Heart left ventricle (tissue), 16 donors: ENCODE measurements at regions of chr12 and their contacts with region 1.

Region 1: GRCh38 chr12:120710031-120710804 is at the start of gene UNC119B:
- DNase-seq: peak; percentile 71 to 89 (median 82)
- ATAC-seq: peak; percentile 47 to 95 (median 90)
- H3K4me3 ChIP-seq: peak within 1 kb of the TSS; percentile 54 to 99 (median 82)
- H3K27ac ChIP-seq: peak within 1 kb of the TSS; percentile 70 to 95 (median 90)
- H3K4me1 ChIP-seq: peaks cover 4 to 35% (median 27%) of the 10 kb centered on the region in 12 donors
- H3K27me3 ChIP-seq: no peaks in the 10 kb centered on the region
- CTCF ChIP-seq: no peak
- POLR2A ChIP-seq: no peak
- total RNA-seq, gene UNC119B: 9.1 to 12.6 (median 10.7) TPM

Region 2: GRCh38 chr12:120586206-120586605 is 124.0 kb before region 1 on chr12:
- intact Hi-C with region 1: loop called (anchors 1 to 5 kb)
- DNase-seq: no peak
- ATAC-seq: no peak
- H3K4me3 ChIP-seq: no peak overlapping the region
- H3K27ac ChIP-seq: no peak overlapping the region
- H3K4me1 ChIP-seq: peaks cover 0 to 37% (median 24%) of the 10 kb centered on the region in 12 donors
- H3K27me3 ChIP-seq: peaks cover 0 to 9% (median 0%) of the 10 kb centered on the region in 9 donors
- CTCF ChIP-seq: no peak
- POLR2A ChIP-seq: no peak

Region 3: GRCh38 chr12:120775862-120776552 is 65.8 kb after region 1 on chr12:
- intact Hi-C with region 1: no loop called
- DNase-seq: no peak
- ATAC-seq: peak in 1 of 4 donors; percentile 40
- H3K4me3 ChIP-seq: no peak overlapping the region
- H3K27ac ChIP-seq: peak overlapping the region in 1 of 12 donors; percentile 53
- H3K4me1 ChIP-seq: peaks cover 0 to 27% (median 11%) of the 10 kb centered on the region in 12 donors
- H3K27me3 ChIP-seq: no peaks in the 10 kb centered on the region
- CTCF ChIP-seq: peak in 3 of 12 donors; percentile 21 to 36 (median 21)
- POLR2A ChIP-seq: no peak